Endothelial cell of umbilical vein (primary cell): ENCODE measurements at regions of chr15 and their contacts with region 1.

Region 1: GRCh38 chr15:66603301-66604179 is 37.7 kb upstream of the LCTL start:
- DNase-seq: peak; percentile 65
- H3K4me3 ChIP-seq: no peak overlapping the region
- H3K27ac ChIP-seq: no peak overlapping the region
- H3K4me1 ChIP-seq: no peaks in the 10 kb centered on the region
- H3K27me3 ChIP-seq: no peaks in the 10 kb centered on the region
- CTCF ChIP-seq: peak; percentile 75 to 93
- POLR2A ChIP-seq: no peak

Region 2: GRCh38 chr15:65619626-65620290 is 983.8 kb before region 1 on chr15:
- CTCF ChIA-PET with region 1: no interaction called
- POLR2A ChIA-PET with region 1: no interaction called
- dilution Hi-C with region 1: no loop called
- intact Hi-C with region 1: no loop called
- DNase-seq: no peak
- H3K4me3 ChIP-seq: no peak overlapping the region
- H3K27ac ChIP-seq: no peak overlapping the region
- H3K4me1 ChIP-seq: no peaks in the 10 kb centered on the region
- H3K27me3 ChIP-seq: no peaks in the 10 kb centered on the region
- CTCF ChIP-seq: no peak
- POLR2A ChIP-seq: no peak

Region 3: DNA sequence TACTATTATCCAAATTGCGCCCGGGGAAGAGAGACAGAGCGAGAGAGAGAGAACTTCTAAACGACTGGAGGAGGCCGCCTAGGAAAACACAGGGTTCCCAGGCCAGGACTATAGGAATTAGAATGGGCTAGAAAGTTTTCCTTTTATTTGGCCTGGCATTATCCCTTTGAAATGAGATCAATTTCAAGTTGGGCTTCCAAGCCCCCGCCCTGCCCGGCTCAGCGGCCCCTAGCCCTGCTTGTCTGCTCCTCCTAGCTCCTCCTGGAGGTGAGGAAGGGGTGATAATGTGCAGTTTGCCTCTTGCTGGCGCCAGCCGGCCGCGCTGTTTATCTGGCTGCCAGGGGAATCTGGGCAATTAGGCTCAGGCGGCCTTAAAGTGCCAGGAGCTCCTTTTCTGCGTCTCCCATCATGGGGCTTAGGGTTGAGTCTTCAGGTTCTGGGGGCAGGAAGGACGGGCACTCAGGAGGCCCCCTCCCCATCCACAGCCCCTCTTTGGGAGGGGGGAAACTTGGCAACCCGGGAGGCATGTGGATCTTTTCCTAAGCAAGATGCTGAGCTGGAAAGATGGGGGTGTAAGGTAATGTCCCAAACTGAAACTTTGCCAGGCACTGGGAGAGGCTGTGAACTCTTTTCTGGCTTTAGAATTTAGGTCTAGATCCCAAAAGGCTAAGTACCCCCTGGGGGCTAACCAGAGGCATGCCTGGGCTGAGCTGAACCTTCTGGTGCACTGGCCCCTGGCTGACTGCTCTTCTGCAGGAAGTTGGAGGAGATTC is 104.0 kb after region 1 on chr15:
- CTCF ChIA-PET with region 1: interaction called, 29 read pairs
- POLR2A ChIA-PET with region 1: no interaction called
- dilution Hi-C with region 1: no loop called
- intact Hi-C with region 1: no loop called
- DNase-seq: peak; percentile 54
- H3K4me3 ChIP-seq: no peak overlapping the region
- H3K27ac ChIP-seq: peak overlapping the region; percentile 15
- H3K4me1 ChIP-seq: peaks cover 40% of the 10 kb centered on the region
- H3K27me3 ChIP-seq: no peaks in the 10 kb centered on the region
- CTCF ChIP-seq: peak in 1 of 2 donors; percentile 40
- POLR2A ChIP-seq: peak; percentile 15

Region 4: GRCh38 chr15:66720206-66721006 is 116.9 kb after region 1 on chr15:
- CTCF ChIA-PET with region 1: interaction called, 10 read pairs
- POLR2A ChIA-PET with region 1: no interaction called
- dilution Hi-C with region 1: no loop called
- intact Hi-C with region 1: no loop called
- DNase-seq: peak; percentile 56
- H3K4me3 ChIP-seq: no peak overlapping the region
- H3K27ac ChIP-seq: peak overlapping the region; percentile 11
- H3K4me1 ChIP-seq: peaks cover 53% of the 10 kb centered on the region
- H3K27me3 ChIP-seq: no peaks in the 10 kb centered on the region
- CTCF ChIP-seq: no peak
- POLR2A ChIP-seq: no peak

Region 5: DNA sequence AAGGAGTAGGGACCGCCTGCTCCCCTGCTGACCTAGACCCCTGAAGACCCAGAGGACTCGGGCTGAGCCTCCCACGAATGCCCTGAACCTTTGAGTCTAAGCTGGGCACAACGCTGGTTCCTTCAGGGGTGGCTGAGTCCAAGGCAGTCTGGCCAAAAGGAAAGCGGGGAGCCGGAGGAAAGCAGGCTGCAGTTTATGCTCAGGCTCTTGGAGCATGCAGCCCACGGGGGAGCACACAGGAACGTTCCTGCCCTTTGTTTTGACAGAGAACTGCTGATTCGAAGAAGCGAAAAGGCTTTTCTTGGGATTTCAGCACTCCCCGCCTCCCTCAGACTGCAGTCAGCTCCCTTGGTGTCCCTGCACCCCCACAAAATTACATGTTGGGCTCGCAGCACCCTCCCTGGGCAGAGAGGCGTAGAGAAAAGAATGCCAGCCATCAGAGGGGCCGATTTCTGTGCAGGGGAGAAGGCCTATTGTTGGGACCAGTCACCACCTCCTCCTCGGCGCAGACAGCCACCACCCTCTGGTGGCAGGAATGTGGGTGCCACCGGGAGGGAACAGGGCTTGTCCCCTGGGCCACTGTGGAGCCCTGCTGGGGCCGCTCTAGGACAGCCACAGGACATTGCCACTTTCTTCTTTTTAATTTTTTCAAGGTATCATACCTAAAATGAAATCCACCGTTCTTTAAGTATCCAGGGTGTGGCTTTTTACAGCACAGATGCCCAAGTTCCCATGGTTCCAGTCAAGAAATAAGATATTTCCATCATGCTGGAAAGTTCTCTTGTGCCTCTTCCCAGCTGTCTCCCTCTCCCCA is 170.7 kb after region 1 on chr15:
- CTCF ChIA-PET with region 1: interaction called, 38 read pairs
- POLR2A ChIA-PET with region 1: no interaction called
- dilution Hi-C with region 1: no loop called
- intact Hi-C with region 1: loop called (anchors 1 kb)
- DNase-seq: peak; percentile 80
- H3K4me3 ChIP-seq: no peak overlapping the region
- H3K27ac ChIP-seq: peak overlapping the region; percentile 25
- H3K4me1 ChIP-seq: peaks cover 21% of the 10 kb centered on the region
- H3K27me3 ChIP-seq: no peaks in the 10 kb centered on the region
- CTCF ChIP-seq: peak; percentile 92 to 96
- POLR2A ChIP-seq: no peak

Region 6: DNA sequence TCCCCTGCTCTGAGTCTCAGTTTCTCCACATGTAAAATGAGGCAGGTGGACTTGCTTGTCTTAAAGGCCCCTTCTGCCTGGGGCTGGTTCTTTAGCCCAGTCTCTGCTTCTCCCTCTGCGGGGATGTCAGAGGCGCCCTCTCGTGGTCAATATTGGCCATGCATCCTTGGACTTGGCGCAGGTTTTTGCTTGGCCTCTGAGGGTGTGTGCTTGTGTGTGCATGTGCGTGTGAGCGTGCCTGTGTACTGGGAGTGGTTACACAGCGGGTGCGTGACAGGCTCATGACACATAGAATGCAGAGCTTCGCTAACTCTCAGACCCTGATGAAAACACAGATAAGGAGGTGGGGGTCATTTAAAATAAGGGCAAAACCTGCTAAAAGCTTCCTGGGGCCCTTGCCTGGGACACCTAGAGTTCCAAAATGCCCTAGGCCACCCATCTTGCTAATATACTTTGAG is 259.4 kb after region 1 on chr15:
- CTCF ChIA-PET with region 1: interaction called, 17 read pairs
- POLR2A ChIA-PET with region 1: no interaction called
- dilution Hi-C with region 1: no loop called
- intact Hi-C with region 1: loop called (anchors 1 kb)
- DNase-seq: peak; percentile 85
- H3K4me3 ChIP-seq: no peak overlapping the region
- H3K27ac ChIP-seq: no peak overlapping the region
- H3K4me1 ChIP-seq: no peaks in the 10 kb centered on the region
- H3K27me3 ChIP-seq: no peaks in the 10 kb centered on the region
- CTCF ChIP-seq: peak; percentile 87 to 94
- POLR2A ChIP-seq: no peak

Region 7: GRCh38 chr15:66901336-66902100 is 298.0 kb after region 1 on chr15:
- CTCF ChIA-PET with region 1: interaction called, 12 read pairs
- POLR2A ChIA-PET with region 1: interaction called, 3 read pairs
- dilution Hi-C with region 1: no loop called
- intact Hi-C with region 1: no loop called
- DNase-seq: peak; percentile 20
- H3K4me3 ChIP-seq: no peak overlapping the region
- H3K27ac ChIP-seq: no peak overlapping the region
- H3K4me1 ChIP-seq: peaks cover 6% of the 10 kb centered on the region
- H3K27me3 ChIP-seq: no peaks in the 10 kb centered on the region
- CTCF ChIP-seq: no peak
- POLR2A ChIP-seq: no peak

Region 8: GRCh38 chr15:67618297-67618696 is 1014.8 kb after region 1 on chr15:
- CTCF ChIA-PET with region 1: no interaction called
- POLR2A ChIA-PET with region 1: no interaction called
- dilution Hi-C with region 1: no loop called
- intact Hi-C with region 1: no loop called
- DNase-seq: no peak
- H3K4me3 ChIP-seq: no peak overlapping the region
- H3K27ac ChIP-seq: no peak overlapping the region
- H3K4me1 ChIP-seq: no peaks in the 10 kb centered on the region
- H3K27me3 ChIP-seq: no peaks in the 10 kb centered on the region
- CTCF ChIP-seq: no peak
- POLR2A ChIP-seq: no peak

Region 9: DNA sequence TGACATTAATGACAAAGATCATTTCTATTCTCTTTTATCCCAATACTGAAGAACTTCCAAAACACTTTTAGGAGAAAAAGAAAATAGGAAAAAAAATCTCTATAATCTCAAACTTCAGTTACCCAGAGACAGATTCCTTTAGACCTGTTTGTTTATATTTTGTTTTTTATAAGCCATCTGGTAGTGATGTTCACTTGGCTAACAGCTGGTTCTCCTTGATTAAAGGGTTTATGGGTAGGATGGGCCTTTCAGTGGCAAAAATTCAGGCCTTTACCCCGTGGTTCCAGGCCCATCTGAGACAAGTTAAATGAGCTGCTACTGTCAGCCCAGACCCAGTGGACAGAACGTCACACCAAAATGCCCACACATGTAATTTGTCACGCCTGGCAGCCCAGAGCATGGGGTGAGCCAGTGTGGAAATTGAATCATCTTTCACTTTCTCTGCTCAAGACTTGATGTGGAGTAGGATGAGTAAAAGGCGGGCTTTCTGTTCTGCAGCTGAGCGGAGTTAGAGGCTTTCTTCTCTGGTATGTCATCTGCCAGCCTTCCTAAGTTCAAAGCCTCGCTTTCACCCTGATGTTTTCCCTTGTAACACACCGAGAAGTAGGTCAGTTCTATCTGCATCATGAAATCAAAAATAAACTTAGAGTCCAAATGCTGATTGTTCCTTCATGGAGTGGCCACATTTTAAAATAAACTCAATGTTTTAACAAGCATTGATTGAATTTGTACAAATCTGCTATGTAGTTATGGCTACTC is 1159.2 kb after region 1 on chr15:
- CTCF ChIA-PET with region 1: no interaction called
- POLR2A ChIA-PET with region 1: no interaction called
- dilution Hi-C with region 1: no loop called
- intact Hi-C with region 1: no loop called
- DNase-seq: no peak
- H3K4me3 ChIP-seq: no peak overlapping the region
- H3K27ac ChIP-seq: no peak overlapping the region
- H3K4me1 ChIP-seq: no peaks in the 10 kb centered on the region
- H3K27me3 ChIP-seq: no peaks in the 10 kb centered on the region
- CTCF ChIP-seq: no peak
- POLR2A ChIP-seq: no peak